ENCODE measurements at regions of chr18 and their contacts with region 1.

Region 1: DNA sequence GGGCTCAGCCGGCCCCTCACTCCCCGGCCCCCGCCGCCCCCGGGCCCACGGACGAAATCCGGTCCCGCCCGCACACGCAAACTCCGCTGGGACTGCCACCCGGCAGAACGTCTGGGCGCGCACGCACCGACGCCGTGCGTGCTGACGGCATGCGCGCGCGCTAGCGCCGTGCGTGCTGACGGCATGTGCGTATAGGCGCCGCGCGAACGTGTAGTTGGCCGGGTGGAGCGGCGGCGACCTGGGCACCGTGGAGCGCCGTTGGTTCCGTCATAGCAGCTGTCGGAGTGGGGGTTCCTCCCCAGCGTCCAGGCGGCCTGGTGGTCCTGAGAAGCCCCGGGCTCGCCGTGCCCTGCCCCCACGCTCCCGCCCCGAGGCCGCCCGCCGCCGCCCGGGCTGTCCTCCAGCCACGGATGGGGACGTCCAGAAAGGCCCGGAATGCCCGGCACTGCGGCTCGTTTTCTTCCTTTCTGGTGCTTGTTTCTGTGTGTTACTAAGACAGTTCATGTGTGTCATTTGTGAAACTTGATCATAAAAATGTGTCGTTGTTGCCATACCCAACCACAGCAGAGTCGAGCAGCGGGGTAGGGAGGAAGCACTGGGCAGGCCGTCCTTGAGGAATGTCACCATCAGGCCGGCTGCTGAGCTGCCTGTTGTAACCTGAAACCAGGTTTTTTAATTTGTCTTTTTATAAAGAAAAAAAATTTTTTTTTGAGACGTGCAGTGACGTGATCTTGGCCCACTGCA is at the start of gene TXNL4A:
- DNase-seq: peak; percentile 76 to 94 (median 87)
- H3K4me3 ChIP-seq: peak within 1 kb of the TSS; percentile 74 to 100 (median 92)
- H3K27ac ChIP-seq: peak within 1 kb of the TSS; percentile 75 to 99 (median 92)
- H3K27me3 ChIP-seq: no peaks in the 10 kb centered on the region
- CTCF ChIP-seq: peak in 9 of 56 donors; percentile 0 to 37 (median 7)
- total RNA-seq, gene TXNL4A: 68.3 to 133 (median 95.2) TPM

Region 2: DNA sequence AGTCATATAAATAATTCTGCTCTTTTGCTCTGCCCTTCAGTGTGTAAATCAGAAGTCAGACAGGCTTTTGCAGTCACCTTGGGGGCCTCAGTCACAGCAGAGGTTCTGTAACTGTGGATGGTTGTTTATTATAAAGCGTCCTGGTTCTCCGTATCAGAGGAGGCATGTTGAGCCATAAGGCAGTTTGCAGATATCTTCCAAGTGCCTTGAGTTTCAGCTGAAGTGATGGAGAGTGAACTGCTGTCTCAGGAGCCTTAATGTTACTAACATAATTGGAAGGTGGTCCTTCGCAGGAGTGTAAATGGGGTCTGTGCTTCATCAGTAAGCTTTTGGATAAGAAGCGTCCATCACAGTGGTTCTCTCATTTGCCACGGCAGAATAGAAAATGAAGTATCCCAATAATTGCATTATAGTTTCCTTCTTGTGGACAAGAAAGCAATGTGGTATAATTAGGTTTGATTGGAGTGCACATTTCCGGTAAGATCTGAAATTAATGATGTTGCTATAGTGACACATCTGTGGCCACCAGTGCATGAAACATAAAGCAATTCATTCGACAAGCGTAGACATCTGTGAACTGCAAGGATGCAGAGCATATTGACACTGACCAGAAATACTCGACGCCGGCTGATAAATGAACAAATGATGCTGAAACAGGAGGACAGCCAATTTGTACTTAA is 705.4 kb before region 1 on chr18:
- intact Hi-C with region 1: no loop called
- DNase-seq: no peak
- H3K4me3 ChIP-seq: no peak overlapping the region
- H3K27ac ChIP-seq: no peak overlapping the region
- H3K27me3 ChIP-seq: no peaks in the 10 kb centered on the region
- CTCF ChIP-seq: no peak

Region 3: DNA sequence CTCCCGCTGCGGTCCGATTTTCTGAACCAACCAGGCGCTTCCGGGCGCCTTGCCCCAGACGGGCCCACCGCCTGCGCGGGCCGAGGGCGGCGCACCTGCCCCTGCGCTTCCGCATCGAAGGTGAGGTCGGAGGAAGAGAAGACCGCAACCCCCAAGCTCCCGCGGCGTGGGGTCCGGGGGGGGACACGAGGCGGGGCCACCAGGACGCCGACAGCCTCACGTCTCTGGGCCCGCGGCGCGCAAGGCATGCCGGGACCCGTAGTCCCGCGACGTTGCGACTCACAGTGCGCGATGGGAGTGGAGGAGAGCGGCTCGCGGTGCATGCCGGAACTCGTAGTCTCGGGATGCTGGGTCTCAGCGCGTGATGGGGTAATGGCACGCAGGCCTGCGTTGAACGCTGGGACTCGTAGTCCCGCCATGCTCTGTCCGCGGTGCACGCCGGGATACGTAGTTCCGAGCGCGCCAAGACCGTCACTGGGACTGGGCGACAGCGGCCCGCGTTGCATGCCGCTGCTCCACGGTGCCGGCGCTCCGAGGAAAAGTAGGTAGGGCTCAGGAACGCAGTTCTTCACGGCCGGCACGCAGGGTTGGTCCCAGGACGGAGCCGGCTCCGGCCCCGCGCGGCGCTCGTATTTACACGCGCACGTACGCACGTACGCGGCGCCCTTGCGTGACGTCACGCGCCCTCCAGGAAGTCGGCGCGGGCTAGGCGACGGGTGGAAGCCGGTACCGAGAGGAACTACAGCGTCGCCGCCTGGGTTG is 309.3 kb before region 1 on chr18 and contains the start of gene CTDP1:
- intact Hi-C with region 1: loop called in 1 of 2 experiments (anchors 2 kb)
- DNase-seq: peak; percentile 99 to 100 (median 100)
- H3K4me3 ChIP-seq: peak within 1 kb of the TSS; percentile 57 to 100 (median 94)
- H3K27ac ChIP-seq: peak within 1 kb of the TSS; percentile 87 to 100 (median 98)
- H3K27me3 ChIP-seq: no peaks in the 10 kb centered on the region
- CTCF ChIP-seq: peak in 20 of 56 donors; percentile 7 to 42 (median 25)
- total RNA-seq, gene CTDP1: 12.4 to 26.2 (median 18.1) TPM

Region 4: DNA sequence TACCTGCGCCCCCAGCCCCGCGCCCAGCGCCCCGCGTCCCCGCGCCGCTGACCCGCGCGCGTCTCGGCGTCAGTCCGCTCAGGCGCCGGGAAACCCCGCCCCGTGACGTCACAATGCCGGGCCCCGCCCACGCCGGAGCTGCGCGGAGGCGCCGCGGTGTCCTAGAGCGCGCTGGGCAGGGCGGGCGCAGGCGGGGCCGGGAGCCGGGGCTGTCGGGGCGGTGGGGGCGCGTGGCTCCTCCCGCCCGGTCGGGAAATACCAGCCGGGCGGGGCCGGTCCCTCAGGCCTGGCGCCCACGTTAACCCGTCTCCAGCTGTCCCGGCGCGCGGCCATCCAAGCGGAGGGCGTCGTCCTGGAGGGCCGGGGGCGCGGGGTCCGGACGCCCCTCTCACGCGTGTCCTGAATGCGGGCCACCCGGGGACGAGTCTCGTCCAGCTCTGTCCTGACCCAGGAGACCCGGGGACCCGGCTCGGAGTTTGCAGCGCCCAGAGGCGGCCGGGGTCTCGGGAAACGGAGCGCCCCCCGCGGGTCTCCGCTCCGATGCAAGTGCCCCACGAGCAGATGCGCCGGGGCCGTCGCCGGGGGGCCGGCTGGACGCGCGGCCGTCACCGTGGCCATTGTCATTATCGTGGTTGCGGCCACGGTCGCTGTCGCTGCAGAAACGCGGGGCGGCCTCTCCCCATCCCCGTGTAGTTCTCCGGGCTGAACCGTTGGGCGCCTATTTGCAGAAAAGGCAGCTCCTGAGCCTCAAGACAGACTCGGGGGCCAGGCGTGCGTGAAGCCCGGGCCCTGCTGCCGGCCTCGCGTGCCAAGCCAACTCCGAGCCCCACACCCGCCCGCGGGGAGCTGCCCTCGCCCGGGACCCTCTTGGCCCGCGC is 36.8 kb before region 1 on chr18 and contains the start of gene SLC66A2:
- intact Hi-C with region 1: loop called in 1 of 2 experiments (anchors 1 kb)
- DNase-seq: peak; percentile 86 to 96 (median 91)
- H3K4me3 ChIP-seq: peak within 1 kb of the TSS; percentile 69 to 95 (median 89)
- H3K27ac ChIP-seq: peak within 1 kb of the TSS in 52 of 59 donors; percentile 16 to 92 (median 66)
- H3K27me3 ChIP-seq: no peaks in the 10 kb centered on the region
- CTCF ChIP-seq: peak in 19 of 56 donors; percentile 6 to 35 (median 17)
- total RNA-seq, gene SLC66A2: 48.9 to 138 (median 96.6) TPM

Region 5: GRCh38 chr18:80157708-80158343 is 169.2 kb after region 1 on chr18:
- intact Hi-C with region 1: loop called in 1 of 2 experiments (anchors 5 kb)
- DNase-seq: peak; percentile 70 to 91 (median 84)
- H3K4me3 ChIP-seq: peak overlapping the region in 22 of 59 donors; percentile 1 to 47 (median 16)
- H3K27ac ChIP-seq: peak overlapping the region in 16 of 59 donors; percentile 8 to 69 (median 38)
- H3K27me3 ChIP-seq: no peaks in the 10 kb centered on the region
- CTCF ChIP-seq: peak; percentile 91 to 99 (median 97)

Measured in dorsolateral prefrontal cortex (tissue), 120 donors.